Activated CD8-positive, alpha-beta T cell treated with anti-CD3 and anti-CD28 coated beads for 36 hours (primary cell): ENCODE measurements at regions of chr9 and their contacts with region 1.

Region 1: DNA sequence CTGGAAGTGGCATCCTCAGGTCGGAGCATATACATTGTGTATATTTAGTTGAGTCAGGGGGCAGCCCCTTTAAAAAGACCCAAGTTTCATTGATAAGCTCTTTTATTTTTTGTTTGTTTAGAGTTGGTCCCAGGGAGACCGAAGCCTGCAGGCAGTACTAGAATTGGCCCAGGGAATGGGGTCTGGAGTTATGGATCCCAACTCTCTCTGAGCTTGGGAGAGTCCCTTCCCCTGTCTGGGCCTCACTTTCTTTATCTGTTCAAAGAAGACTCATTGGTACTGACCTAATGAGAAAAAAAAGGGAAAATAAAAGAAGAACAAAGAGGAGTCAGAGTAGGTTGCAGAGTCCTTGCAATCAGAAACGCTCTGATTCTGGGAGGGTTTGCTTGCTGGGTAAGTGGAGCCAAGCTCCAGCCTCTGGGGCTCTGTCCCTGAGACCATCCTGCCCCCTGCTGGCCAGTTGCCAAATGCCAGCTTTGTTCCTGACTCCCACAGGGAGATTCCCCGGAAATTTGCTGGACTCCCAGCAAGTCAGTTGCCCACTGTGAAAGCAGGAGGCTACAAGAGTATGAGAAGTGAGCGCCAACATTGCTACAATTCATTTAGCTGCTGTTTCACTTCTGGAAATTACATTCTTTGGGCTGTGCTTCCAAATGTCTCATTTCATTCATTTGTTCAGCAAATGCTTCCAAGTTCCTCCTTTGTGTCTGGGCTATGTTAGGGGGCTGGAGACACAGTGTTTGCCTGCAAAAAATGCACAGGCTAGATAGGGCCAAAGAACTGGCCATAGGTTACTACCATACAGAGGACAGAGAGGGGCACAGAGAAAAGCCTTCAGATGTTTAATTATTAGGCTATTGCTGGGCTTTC is 156.2 kb downstream of the MELK start:
- DNase-seq: peak; percentile 80
- ATAC-seq: peak; percentile 72
- H3K4me3 Mint-ChIP-seq: no peak overlapping the region
- H3K27ac Mint-ChIP-seq: no peak overlapping the region
- H3K4me1 Mint-ChIP-seq: no peaks in the 10 kb centered on the region
- H3K27me3 Mint-ChIP-seq: no peaks in the 10 kb centered on the region
- CTCF ChIP-seq: peak; percentile 99

Region 2: DNA sequence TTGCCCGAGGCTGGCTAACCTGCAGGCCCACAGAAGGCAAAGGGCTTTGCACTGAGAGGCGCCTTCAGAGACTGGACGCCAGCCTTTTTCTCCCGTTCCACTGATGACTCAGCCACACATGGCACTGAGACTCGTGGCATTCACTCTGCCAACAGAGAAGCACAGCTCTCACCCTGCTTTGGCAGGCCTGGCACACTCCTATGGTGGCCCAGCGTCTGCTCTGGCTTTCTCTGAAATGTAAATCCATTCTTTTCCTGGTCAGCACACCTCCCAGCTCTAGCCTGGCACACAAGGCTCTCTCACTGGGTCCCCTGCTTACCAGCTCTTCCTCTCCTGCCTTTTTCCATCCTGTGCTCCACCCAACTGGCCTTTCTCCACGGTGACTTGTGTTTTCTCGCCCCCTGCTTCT is 162.1 kb before region 1 on chr9:
- CTCF ChIA-PET with region 1: no interaction called
- POLR2A ChIA-PET with region 1: no interaction called
- intact Hi-C with region 1: no loop called
- DNase-seq: no peak
- ATAC-seq: no peak
- H3K4me3 Mint-ChIP-seq: no peak overlapping the region
- H3K27ac Mint-ChIP-seq: no peak overlapping the region
- H3K4me1 Mint-ChIP-seq: no peaks in the 10 kb centered on the region
- H3K27me3 Mint-ChIP-seq: no peaks in the 10 kb centered on the region
- CTCF ChIP-seq: no peak

Region 3: DNA sequence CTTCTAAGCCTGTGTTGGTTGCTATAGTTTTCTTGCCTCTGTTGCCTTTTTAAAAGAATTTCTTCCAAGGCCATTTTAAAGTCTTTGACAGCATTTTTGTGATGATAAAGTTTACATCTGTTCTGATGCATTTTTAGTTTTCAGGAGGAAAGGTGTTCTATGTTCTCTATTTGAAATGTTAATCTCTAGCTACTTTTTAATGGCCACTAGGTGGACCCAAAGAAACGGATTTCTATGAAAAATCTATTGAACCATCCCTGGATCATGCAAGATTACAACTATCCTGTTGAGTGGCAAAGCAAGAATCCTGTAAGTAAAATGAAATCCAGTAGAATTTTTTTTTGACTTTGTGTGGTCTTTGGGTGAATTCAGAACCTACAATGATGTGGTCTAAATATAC is 96.0 kb before region 1 on chr9:
- CTCF ChIA-PET with region 1: interaction called, 25 read pairs
- POLR2A ChIA-PET with region 1: no interaction called
- intact Hi-C with region 1: loop called (anchors 2 kb)
- DNase-seq: no peak
- ATAC-seq: no peak
- H3K4me3 Mint-ChIP-seq: no peak overlapping the region
- H3K27ac Mint-ChIP-seq: no peak overlapping the region
- H3K4me1 Mint-ChIP-seq: no peaks in the 10 kb centered on the region
- H3K27me3 Mint-ChIP-seq: no peaks in the 10 kb centered on the region
- CTCF ChIP-seq: peak; percentile 62

Region 4: GRCh38 chr9:36698984-36699383 is 29.9 kb before region 1 on chr9:
- CTCF ChIA-PET with region 1: interaction called, 16 read pairs
- POLR2A ChIA-PET with region 1: no interaction called
- intact Hi-C with region 1: no loop called
- DNase-seq: no peak
- ATAC-seq: no peak
- H3K4me3 Mint-ChIP-seq: no peak overlapping the region
- H3K27ac Mint-ChIP-seq: no peak overlapping the region
- H3K4me1 Mint-ChIP-seq: no peaks in the 10 kb centered on the region
- H3K27me3 Mint-ChIP-seq: peaks cover 11% of the 10 kb centered on the region
- CTCF ChIP-seq: no peak

Region 5: DNA sequence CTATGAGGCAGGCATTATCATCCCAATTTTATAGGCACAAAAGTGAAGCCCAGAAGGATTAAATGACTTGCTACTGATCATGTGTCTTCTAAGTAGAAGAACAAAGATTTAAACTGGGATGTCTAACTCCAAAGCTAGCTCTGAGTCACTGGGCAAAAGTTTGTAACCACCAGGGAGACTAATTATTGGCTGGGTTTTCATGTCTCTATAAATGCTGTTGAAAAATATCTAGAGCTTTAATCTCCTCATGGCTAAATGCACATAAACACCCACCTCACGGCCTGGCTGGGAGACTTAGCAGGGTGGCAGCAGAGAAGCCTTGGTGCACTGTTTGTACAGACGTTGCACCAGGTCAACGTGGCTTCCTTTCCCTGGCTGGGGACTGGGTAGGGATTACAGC is 11.6 kb before region 1 on chr9:
- CTCF ChIA-PET with region 1: interaction called, 10 read pairs
- POLR2A ChIA-PET with region 1: no interaction called
- intact Hi-C with region 1: no loop called
- DNase-seq: no peak
- ATAC-seq: no peak
- H3K4me3 Mint-ChIP-seq: no peak overlapping the region
- H3K27ac Mint-ChIP-seq: no peak overlapping the region
- H3K4me1 Mint-ChIP-seq: no peaks in the 10 kb centered on the region
- H3K27me3 Mint-ChIP-seq: peaks cover 5% of the 10 kb centered on the region
- CTCF ChIP-seq: no peak